ENCODE measurements at regions of chr19 and their contacts with region 1.

Region 1: GRCh38 chr19:29860492-29860891 is 48.7 kb downstream of the CCNE1 start:
- DNase-seq: no peak
- H3K4me3 ChIP-seq: no peak overlapping the region
- H3K27ac ChIP-seq: no peak overlapping the region
- H3K4me1 ChIP-seq: no peaks in the 10 kb centered on the region
- H3K27me3 ChIP-seq: no peaks in the 10 kb centered on the region
- CTCF ChIP-seq: no peak

Region 2: DNA sequence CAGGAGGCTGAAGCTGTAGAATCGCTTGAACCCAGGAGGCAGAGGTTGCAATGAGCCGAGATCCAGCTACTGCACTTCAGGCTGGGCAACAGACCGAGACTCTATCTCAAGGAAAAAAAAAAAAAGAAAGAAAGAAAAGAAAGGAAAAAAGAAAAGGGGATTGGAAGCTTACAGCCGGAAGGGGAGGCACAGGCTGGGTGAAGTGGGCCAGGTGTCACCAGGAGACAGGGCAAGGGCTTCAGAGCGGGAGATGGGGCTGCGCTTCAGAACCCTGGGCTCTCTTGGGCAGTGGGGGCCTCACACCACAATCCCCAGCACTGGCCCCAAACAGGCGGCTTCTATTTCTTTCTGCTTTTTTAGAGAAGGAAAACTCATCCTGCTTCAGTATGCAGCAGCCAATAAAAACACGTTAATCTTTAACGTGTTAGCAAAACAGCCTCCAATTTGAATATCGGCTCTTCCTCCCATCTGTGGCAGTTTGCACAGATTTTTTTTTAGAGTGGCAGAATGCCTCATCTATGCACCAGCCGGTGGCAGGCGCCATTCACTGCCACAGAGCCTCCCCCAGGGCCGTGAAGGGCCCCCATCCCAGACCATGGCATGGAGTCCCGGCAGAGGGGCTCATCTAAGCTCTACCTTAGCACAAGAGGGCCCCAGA is 98.8 kb before region 1 on chr19:
- intact Hi-C with region 1: loop called (anchors 10 kb)
- DNase-seq: peak in 2 of 5 donors; percentile 17 to 26
- H3K4me3 ChIP-seq: no peak overlapping the region
- H3K27ac ChIP-seq: no peak overlapping the region
- H3K4me1 ChIP-seq: no peaks in the 10 kb centered on the region
- H3K27me3 ChIP-seq: no peaks in the 10 kb centered on the region
- CTCF ChIP-seq: no peak

Region 3: GRCh38 chr19:29941828-29942403 is 81.4 kb after region 1 on chr19 and contains the start of gene URI1:
- intact Hi-C with region 1: no loop called
- DNase-seq: peak; percentile 91 to 96 (median 93)
- H3K4me3 ChIP-seq: peak within 1 kb of the TSS; percentile 73 to 95 (median 86)
- H3K27ac ChIP-seq: peak within 1 kb of the TSS in 1 of 2 donors; percentile 55
- H3K4me1 ChIP-seq: peaks cover 0 to 6% (median 5%) of the 10 kb centered on the region in 3 donors
- H3K27me3 ChIP-seq: no peaks in the 10 kb centered on the region
- CTCF ChIP-seq: no peak
- total RNA-seq, gene URI1: 56.3 TPM

Region 4: DNA sequence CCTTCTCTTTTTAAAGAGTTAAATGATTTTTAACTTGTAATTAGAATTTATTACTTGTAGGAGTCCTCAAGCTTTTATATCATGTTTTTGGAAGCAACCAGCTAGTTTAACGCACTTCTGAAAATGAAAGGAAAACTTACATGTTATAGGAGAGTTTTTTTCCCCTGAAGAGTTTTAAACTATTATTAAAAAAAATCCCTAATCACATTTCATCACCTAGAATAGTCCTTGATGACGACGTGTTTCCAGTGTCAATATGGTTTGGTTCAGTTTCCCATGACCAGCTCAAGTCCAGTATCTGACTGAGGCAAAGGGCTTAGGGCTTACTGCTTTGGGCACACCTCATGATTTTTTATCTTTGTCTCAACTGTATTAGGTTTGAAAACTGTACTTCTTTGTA is 117.6 kb after region 1 on chr19:
- intact Hi-C with region 1: no loop called
- DNase-seq: no peak
- H3K4me3 ChIP-seq: no peak overlapping the region
- H3K27ac ChIP-seq: no peak overlapping the region
- H3K4me1 ChIP-seq: no peaks in the 10 kb centered on the region
- H3K27me3 ChIP-seq: no peaks in the 10 kb centered on the region
- CTCF ChIP-seq: no peak